Naive thymus-derived CD4-positive, alpha-beta T cell (primary cell): ENCODE measurements at regions of chr5 and their contacts with region 1.

Region 1: GRCh38 chr5:80083101-80083890 is 48.1 kb downstream of the THBS4 start:
- DNase-seq: peak; percentile 13 to 63 (median 50)
- ATAC-seq: peak; percentile 87
- H3K4me3 ChIP-seq: peak overlapping the region; percentile 6
- H3K4me3 Mint-ChIP-seq: peak overlapping the region; percentile 76 to 88 (median 82)
- H3K27ac ChIP-seq: peak overlapping the region; percentile 22
- H3K27ac Mint-ChIP-seq: peak overlapping the region; percentile 26 to 92 (median 62)
- H3K4me1 ChIP-seq: no peaks in the 10 kb centered on the region
- H3K4me1 Mint-ChIP-seq: peaks cover 6 to 17% (median 12%) of the 10 kb centered on the region in 7 donors
- H3K27me3 ChIP-seq: no peaks in the 10 kb centered on the region
- H3K27me3 Mint-ChIP-seq: peaks cover 0 to 3% (median 0%) of the 10 kb centered on the region in 5 donors

Region 2: DNA sequence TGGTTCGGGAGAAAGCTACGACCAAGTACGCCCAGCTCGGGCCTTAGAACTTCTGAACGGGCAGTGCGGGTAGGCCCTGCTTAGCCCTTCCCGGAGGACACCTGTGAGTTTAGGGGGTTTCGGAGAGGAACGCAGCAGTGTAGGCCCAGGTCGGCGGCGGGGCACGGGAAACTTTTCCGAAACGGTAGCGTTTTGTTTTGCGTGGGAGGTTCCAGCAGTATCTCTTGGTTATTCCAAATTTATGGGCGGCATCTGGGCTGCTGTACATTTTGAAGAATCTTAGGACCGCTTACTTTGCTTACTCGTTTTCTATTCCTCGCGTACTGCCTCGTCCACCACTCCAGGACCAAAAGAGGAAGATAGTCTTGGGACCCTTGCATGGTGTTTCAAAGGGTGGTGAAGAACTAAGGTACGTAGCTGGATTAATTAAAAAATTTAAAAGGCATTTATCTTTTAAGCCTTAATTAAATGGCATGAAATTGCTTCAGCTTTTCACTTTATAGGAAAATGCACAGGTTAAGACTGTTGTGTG is 470.6 kb before region 1 on chr5:
- CTCF ChIA-PET with region 1: no interaction called
- POLR2A ChIA-PET with region 1: no interaction called
- intact Hi-C with region 1: loop called in 1 of 2 experiments (anchors 1 kb)
- DNase-seq: no peak
- ATAC-seq: no peak
- H3K4me3 ChIP-seq: peak overlapping the region; percentile 84
- H3K4me3 Mint-ChIP-seq: peak overlapping the region; percentile 95 to 100 (median 97)
- H3K27ac ChIP-seq: peak overlapping the region; percentile 90
- H3K27ac Mint-ChIP-seq: peak overlapping the region; percentile 91 to 99 (median 98)
- H3K4me1 ChIP-seq: peaks cover 14 to 18% of the 10 kb centered on the region in 2 donors
- H3K4me1 Mint-ChIP-seq: peaks cover 25 to 58% (median 44%) of the 10 kb centered on the region in 7 donors
- H3K27me3 ChIP-seq: no peaks in the 10 kb centered on the region
- H3K27me3 Mint-ChIP-seq: peaks cover 0 to 6% (median 2%) of the 10 kb centered on the region in 5 donors

Region 3: DNA sequence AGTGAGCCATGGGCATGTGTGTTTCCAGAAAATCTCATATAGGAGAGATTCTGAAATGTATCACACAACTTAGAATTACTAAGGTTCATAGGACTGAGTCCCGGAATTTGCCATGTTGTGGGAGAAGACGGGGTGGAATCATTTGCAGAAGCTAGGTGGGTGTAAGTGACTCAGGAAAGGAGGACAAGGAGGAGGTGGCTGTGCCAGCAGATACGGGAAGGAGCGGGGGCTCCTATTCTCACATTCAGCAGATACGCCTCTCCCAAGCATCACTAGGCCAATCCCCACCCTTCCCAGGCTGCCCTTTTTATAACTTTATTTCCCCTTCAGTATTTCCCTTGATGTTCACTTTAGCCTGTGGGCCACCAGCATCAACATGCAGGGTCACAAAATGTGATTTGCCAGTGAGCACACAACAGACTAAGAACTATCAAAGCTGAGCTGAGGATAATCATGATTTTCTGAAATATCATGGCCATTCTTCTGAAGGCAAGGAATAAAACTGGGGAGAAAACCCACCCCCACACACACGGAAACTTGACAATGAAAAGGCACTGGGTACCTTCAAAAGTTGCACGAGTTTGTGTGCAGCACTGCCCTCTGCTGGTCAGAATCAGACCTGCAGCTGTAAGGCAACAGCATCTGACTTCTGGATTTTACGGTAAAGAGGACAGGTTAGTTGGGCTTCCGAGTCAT is 225.4 kb before region 1 on chr5:
- CTCF ChIA-PET with region 1: interaction called, 5 read pairs
- POLR2A ChIA-PET with region 1: no interaction called
- intact Hi-C with region 1: loop called (anchors 1 kb)
- DNase-seq: peak; percentile 39 to 83 (median 64)
- ATAC-seq: peak; percentile 79
- H3K4me3 ChIP-seq: no peak overlapping the region
- H3K4me3 Mint-ChIP-seq: no peak overlapping the region
- H3K27ac ChIP-seq: no peak overlapping the region
- H3K27ac Mint-ChIP-seq: no peak overlapping the region
- H3K4me1 ChIP-seq: no peaks in the 10 kb centered on the region
- H3K4me1 Mint-ChIP-seq: peaks cover 0 to 2% (median 0%) of the 10 kb centered on the region in 7 donors
- H3K27me3 ChIP-seq: no peaks in the 10 kb centered on the region
- H3K27me3 Mint-ChIP-seq: peaks cover 0 to 22% (median 0%) of the 10 kb centered on the region in 5 donors

Region 4: GRCh38 chr5:79924936-79925893 is 158.1 kb before region 1 on chr5:
- CTCF ChIA-PET with region 1: interaction called, 11 read pairs
- POLR2A ChIA-PET with region 1: no interaction called
- intact Hi-C with region 1: loop called in 1 of 2 experiments (anchors 1 kb)
- DNase-seq: peak in 6 of 9 donors; percentile 7 to 39 (median 22)
- ATAC-seq: no peak
- H3K4me3 ChIP-seq: no peak overlapping the region
- H3K4me3 Mint-ChIP-seq: no peak overlapping the region
- H3K27ac ChIP-seq: no peak overlapping the region
- H3K27ac Mint-ChIP-seq: no peak overlapping the region
- H3K4me1 ChIP-seq: no peaks in the 10 kb centered on the region
- H3K4me1 Mint-ChIP-seq: peaks cover 0 to 3% (median 0%) of the 10 kb centered on the region in 7 donors
- H3K27me3 ChIP-seq: no peaks in the 10 kb centered on the region
- H3K27me3 Mint-ChIP-seq: peaks cover 0 to 18% (median 0%) of the 10 kb centered on the region in 5 donors

Region 5: GRCh38 chr5:80002677-80003076 is 80.6 kb before region 1 on chr5:
- CTCF ChIA-PET with region 1: no interaction called
- POLR2A ChIA-PET with region 1: no interaction called
- intact Hi-C with region 1: no loop called
- DNase-seq: no peak
- ATAC-seq: no peak
- H3K4me3 ChIP-seq: no peak overlapping the region
- H3K4me3 Mint-ChIP-seq: no peak overlapping the region
- H3K27ac ChIP-seq: no peak overlapping the region
- H3K27ac Mint-ChIP-seq: no peak overlapping the region
- H3K4me1 ChIP-seq: no peaks in the 10 kb centered on the region
- H3K4me1 Mint-ChIP-seq: peaks cover 0 to 2% (median 0%) of the 10 kb centered on the region in 7 donors
- H3K27me3 ChIP-seq: no peaks in the 10 kb centered on the region
- H3K27me3 Mint-ChIP-seq: peaks cover 0 to 5% (median 0%) of the 10 kb centered on the region in 5 donors

Region 6: GRCh38 chr5:80308526-80308925 is 225.2 kb after region 1 on chr5:
- CTCF ChIA-PET with region 1: interaction called, 10 read pairs
- POLR2A ChIA-PET with region 1: no interaction called
- intact Hi-C with region 1: loop called in 1 of 2 experiments (anchors 2 kb)
- DNase-seq: no peak
- ATAC-seq: no peak
- H3K4me3 ChIP-seq: no peak overlapping the region
- H3K4me3 Mint-ChIP-seq: no peak overlapping the region
- H3K27ac ChIP-seq: no peak overlapping the region
- H3K27ac Mint-ChIP-seq: no peak overlapping the region
- H3K4me1 ChIP-seq: no peaks in the 10 kb centered on the region
- H3K4me1 Mint-ChIP-seq: peaks cover 0 to 4% (median 0%) of the 10 kb centered on the region in 7 donors
- H3K27me3 ChIP-seq: no peaks in the 10 kb centered on the region
- H3K27me3 Mint-ChIP-seq: peaks cover 0 to 3% (median 0%) of the 10 kb centered on the region in 5 donors